ENCODE measurements at regions of chr15 and their contacts with region 1.

Region 1: GRCh38 chr15:73637527-73637926 is 4.3 kb upstream of the NPTN start:
- DNase-seq: no peak
- H3K4me3 ChIP-seq: no peak overlapping the region
- H3K27ac ChIP-seq: no peak overlapping the region
- H3K4me1 ChIP-seq: peaks cover 0 to 11% (median 5%) of the 10 kb centered on the region in 4 donors
- H3K27me3 ChIP-seq: peaks cover 0 to 16% of the 10 kb centered on the region in 2 donors
- CTCF ChIP-seq: no peak

Region 2: GRCh38 chr15:73560501-73561117 is 76.9 kb before region 1 on chr15:
- intact Hi-C with region 1: loop called (anchors 5 kb)
- DNase-seq: no peak
- H3K4me3 ChIP-seq: no peak overlapping the region
- H3K27ac ChIP-seq: no peak overlapping the region
- H3K4me1 ChIP-seq: peaks cover 0 to 12% (median 4%) of the 10 kb centered on the region in 4 donors
- H3K27me3 ChIP-seq: no peaks in the 10 kb centered on the region
- CTCF ChIP-seq: peak in 1 of 2 experiments; percentile 46

Region 3: DNA sequence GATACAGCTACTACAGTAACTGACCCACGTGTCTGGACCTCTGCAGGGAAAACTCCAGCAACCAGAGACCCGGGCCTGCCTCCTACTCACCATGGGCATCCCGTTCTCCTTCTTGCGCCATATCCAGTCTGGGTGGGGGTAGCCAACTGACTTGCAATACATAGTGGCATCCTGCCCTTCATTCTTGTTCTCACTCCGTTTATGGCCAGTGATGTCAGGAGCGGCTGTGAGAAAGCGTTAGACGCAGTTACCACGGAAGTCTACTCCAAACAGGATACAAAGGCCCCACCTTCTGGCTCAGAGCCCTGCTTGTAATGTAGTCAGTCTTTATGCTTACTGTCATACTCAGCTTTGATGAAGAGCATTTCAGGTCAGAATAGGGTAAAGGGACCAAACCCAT is 64.0 kb before region 1 on chr15:
- intact Hi-C with region 1: no loop called
- DNase-seq: no peak
- H3K4me3 ChIP-seq: no peak overlapping the region
- H3K27ac ChIP-seq: no peak overlapping the region
- H3K4me1 ChIP-seq: peaks cover 0 to 3% (median 0%) of the 10 kb centered on the region in 4 donors
- H3K27me3 ChIP-seq: no peaks in the 10 kb centered on the region
- CTCF ChIP-seq: no peak

Region 4: GRCh38 chr15:73674587-73674986 is 37.1 kb after region 1 on chr15:
- intact Hi-C with region 1: no loop called
- DNase-seq: no peak
- H3K4me3 ChIP-seq: no peak overlapping the region
- H3K27ac ChIP-seq: no peak overlapping the region
- H3K4me1 ChIP-seq: peaks cover 0 to 7% (median 0%) of the 10 kb centered on the region in 4 donors
- H3K27me3 ChIP-seq: peaks cover 0 to 24% of the 10 kb centered on the region in 2 donors
- CTCF ChIP-seq: no peak